HEK293T (cell line): ENCODE measurements at regions of chr9 and their contacts with region 1.

Region 1: DNA sequence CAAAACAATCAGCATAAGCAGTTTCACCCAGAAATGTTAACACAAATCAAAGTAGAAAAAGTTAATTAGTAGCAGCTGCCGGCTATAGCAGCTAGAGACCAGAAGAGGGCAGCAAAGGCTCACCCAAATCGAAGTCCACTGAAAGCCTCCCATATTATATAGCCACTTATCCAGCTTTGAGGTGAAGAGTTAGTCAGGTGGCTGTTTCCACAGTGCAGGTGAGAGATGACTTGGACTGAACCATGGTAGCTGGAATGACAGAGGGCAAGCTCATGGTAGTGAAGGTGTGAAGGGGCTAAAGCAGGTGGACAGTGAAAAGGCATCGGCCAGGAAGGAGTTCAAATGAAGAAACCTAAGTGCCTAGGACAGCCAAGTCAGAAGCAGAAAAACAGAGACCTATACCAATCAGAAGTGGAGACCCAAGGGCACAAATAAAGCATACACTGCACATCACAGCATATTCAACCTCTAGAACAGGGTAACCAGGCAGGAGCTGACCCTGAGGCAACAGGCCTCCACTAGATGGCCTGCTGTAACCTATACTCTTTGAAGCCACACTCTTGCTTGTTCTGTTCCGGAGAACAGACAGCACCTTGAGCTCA is 7.2 kb upstream of the RNF38 start:
- DNase-seq: peak; percentile 52

Region 2: GRCh38 chr9:36450110-36450732 is 43.0 kb after region 1 on chr9:
- CTCF ChIA-PET with region 1: interaction called, 13 read pairs
- POLR2A ChIA-PET with region 1: interaction called, 3 read pairs
- DNase-seq: peak; percentile 48

Region 3: GRCh38 chr9:36560857-36561221 is 153.6 kb after region 1 on chr9:
- CTCF ChIA-PET with region 1: interaction called, 12 read pairs
- POLR2A ChIA-PET with region 1: no interaction called
- DNase-seq: no peak